ENCODE measurements at regions of chr20 and their contacts with region 1.

Region 1: GRCh38 chr20:46349035-46349741 is 40.9 kb upstream of the CDH22 start:
- DNase-seq: no peak
- H3K4me3 ChIP-seq: no peak overlapping the region
- H3K27me3 ChIP-seq: peaks cover under 1% of the 10 kb centered on the region
- CTCF ChIP-seq: peak; percentile 80

Region 2: DNA sequence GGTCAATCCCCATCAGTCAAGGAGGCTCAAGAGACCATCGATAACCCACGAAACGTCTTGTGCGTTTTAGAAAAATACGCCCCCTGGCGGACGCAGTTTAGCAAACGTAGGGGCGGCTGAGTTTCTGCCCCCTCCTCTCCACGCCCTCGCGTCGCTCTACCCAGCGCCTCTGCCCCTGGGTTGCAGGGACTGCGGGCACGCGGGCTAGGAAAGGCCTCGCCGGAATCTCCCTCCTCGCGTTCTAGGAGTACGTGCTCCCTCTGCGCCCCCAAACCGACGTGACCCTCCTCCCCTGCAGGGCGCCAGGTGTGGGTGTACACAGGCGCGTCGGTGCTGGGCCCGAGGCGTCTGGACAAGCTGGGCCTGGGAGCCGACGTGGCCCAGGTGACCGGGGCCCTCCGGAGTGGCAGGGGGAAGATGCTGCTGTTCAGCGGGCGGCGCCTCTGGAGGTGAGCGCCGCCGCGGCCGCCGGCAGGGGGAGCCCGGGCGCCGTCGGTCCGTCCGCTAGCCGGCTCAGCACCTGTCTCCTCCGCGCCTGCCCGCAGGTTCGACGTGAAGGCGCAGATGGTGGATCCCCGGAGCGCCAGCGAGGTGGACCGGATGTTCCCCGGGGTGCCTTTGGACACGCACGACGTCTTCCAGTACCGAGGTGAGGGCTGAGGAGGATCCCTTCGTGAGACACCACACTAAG is 335.2 kb before region 1 on chr20:
- CTCF ChIA-PET with region 1: interaction called, 10 read pairs
- POLR2A ChIA-PET with region 1: no interaction called
- DNase-seq: no peak
- H3K4me3 ChIP-seq: no peak overlapping the region
- H3K27me3 ChIP-seq: peaks cover 47% of the 10 kb centered on the region
- CTCF ChIP-seq: peak; percentile 71

Region 3: GRCh38 chr20:46132705-46133120 is 216.5 kb before region 1 on chr20:
- CTCF ChIA-PET with region 1: interaction called, 31 read pairs
- POLR2A ChIA-PET with region 1: no interaction called
- DNase-seq: no peak
- H3K4me3 ChIP-seq: no peak overlapping the region
- H3K27me3 ChIP-seq: 0 out of 2 replicates have a peak, but pooled peaks cover 2% of the 10 kb centered on the region
- CTCF ChIP-seq: peak; percentile 86

Region 4: DNA sequence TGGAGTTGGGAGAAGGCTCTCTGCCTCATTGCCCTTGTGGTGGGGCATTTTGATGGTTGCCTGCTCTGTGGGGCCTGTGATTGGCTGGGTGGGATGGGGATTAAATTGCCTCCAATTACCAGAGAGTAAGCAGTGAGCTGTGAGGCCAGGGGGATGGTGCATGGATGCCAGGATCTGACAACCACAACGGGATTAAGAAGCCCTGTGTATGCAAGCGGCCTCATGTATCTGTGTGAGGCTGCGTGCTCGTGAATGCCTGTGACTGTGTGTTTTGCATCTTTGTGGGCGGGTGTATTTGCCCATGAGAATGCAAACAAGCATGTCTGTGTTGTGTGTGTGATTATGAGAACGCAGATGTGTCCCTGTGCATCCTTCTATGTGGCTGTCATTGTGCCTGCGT is 184.9 kb before region 1 on chr20:
- CTCF ChIA-PET with region 1: no interaction called
- POLR2A ChIA-PET with region 1: no interaction called
- DNase-seq: no peak
- H3K4me3 ChIP-seq: no peak overlapping the region
- H3K27me3 ChIP-seq: peaks cover 13% of the 10 kb centered on the region
- CTCF ChIP-seq: no peak

Region 5: GRCh38 chr20:46324960-46325703 is 24.1 kb before region 1 on chr20:
- CTCF ChIA-PET with region 1: interaction called, 10 read pairs
- POLR2A ChIA-PET with region 1: no interaction called
- DNase-seq: no peak
- H3K4me3 ChIP-seq: no peak overlapping the region
- H3K27me3 ChIP-seq: peaks cover 5% of the 10 kb centered on the region
- CTCF ChIP-seq: peak; percentile 49; the same call in 1 of the 2 replicates

Region 6: DNA sequence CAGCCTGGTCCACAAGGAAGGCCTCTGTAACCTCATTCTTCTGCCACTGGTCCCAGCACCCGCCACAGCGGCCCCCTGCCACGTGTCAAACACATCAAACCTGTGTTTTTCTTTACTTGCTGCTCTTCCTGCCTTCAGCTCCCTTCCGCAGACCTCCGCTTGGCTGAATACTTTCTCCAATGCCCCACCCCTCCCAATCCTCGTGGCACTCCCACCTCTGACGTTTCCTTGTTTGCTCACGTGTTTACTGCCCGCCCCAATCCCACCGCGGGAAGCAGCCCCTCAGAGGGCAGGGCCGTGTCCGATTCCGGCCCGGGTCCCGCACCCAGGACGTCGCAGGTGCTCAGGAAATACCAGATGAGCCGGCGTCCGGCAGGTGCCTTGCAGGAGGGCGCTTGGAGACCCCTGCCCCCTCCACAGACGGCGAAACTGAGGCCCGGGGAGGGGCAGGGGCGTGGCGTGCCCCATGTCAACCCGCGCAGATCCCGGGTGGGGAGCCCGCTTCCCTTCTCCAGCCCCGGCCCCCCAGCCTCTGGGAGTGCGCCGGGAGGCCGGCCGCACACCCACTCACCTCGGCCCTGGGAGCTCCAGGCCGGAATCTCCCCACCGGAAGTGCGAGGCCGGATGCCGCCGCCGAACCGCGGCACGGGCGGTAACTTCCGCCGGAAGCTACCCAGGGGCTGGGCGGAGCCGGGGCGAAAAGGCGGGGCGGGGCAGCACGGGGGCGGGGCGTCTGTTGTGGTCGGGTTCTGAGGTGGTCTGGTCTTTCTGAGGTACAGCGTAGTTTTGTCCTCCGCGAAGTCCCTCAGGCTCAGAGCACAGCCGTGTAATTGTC is 14.8 kb after region 1 on chr20:
- CTCF ChIA-PET with region 1: interaction called, 17 read pairs
- POLR2A ChIA-PET with region 1: no interaction called
- DNase-seq: peak; percentile 35
- H3K4me3 ChIP-seq: peak overlapping the region; percentile 95
- H3K27me3 ChIP-seq: no peaks in the 10 kb centered on the region
- CTCF ChIP-seq: no peak

Measured in BJ (cell line).